Left cardiac atrium (tissue), 4 donors: ENCODE measurements at regions of chr3 and their contacts with region 1.

Region 1: DNA sequence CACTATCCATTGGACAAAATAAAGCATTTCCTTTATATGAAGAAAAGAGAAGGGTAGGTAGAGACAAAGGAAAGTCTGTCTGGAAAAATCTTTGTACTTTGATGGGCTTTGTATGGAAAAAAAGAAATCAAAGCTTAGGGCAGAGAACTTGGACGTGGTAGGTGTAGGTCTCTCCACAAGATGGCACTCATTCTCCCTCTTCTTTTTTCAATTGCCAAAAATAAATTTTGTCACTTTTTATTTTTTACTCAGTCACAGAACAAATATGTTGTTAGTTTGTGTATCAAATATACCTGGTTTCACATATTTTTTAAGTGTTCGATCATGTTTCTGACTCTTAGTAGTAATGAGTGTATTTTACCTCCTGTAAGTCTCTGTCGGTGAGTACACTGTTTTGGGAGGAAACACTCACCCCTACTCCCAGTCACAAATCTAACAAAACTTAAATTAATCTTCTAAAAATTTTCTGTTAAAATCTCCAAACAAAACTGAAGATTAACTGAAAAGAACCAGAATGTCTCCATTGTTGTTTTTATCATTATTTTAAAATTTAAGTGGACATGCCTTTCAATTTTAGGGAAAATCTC is 415.8 kb upstream of the GOLIM4 start:
- DNase-seq: no peak
- ATAC-seq: no peak

Region 2: DNA sequence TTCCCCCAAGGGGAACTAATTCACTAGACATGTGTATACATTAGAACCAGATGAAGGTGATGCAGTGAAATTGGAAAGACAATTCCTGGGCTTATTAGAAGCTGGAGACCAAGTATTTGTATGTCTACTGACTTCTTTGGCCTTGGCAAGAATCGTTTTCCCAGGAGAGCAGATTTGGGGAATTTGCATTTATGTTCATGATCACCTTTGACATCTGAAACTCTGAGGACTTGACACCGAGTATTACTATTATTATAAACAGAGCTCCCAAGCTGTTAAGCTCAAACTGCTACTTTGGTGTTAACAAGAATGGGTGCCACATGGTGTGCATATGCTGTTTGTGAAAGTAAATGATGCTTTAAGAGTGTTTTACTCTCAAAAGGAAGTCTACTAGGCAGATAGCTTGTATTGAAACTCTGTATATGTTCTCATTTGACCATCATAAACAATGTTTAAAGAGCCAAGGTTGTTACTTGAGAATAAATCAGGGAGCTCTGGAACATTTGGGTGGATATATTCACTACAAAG is 104.0 kb after region 1 on chr3:
- intact Hi-C with region 1: loop called (anchors 5 to 10 kb)
- DNase-seq: no peak
- ATAC-seq: no peak

Region 3: GRCh38 chr3:168620826-168621225 is 109.3 kb after region 1 on chr3:
- intact Hi-C with region 1: loop called (anchors 5 to 10 kb)
- DNase-seq: no peak
- ATAC-seq: peak; percentile 74 to 78

Region 4: GRCh38 chr3:168847291-168847883 is 335.9 kb after region 1 on chr3:
- intact Hi-C with region 1: loop called (anchors 2 to 5 kb)
- DNase-seq: no peak
- ATAC-seq: peak in 1 of 2 donors; percentile 59